IMR-90 (cell line): ENCODE measurements at regions of chr7 and their contacts with region 1.

Region 1: DNA sequence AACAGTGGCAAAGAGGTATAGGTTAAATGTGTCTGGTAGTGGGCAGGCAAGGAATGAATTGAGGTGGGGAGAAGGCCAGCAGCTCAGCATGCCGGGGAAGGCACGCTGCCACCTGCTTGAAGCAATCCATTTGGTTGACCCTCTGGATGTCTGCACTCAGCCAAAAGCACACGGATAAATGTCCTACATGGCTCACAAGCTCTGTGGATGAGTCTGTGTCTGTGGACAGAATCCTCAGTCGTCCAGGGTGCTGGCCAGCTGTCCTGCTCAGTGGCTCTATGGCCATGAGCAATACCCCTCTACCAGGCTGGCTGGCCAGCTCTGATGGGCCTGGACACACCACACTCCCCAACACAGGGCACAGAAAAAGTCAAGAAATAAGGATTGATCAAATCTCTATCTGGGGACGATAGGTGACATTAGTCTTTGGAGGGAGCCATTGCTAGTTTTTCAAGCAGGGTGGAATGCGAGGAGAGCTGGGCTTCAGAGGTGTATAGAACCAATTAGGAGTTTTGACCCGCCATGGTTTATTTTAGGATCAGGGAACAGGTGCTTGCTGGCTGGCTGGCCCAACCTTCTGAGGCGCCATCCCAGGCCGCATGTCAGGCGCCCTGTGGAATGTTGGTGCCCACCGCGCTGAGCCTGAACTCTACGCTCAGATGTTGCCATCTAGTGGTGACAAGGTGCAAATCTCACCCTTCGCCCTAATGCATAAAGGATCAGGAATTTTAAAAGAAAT is 493.4 kb downstream of the TNS3 start:
- DNase-seq: peak; percentile 67
- ATAC-seq: peak; percentile 69
- H3K4me3 ChIP-seq: no peak overlapping the region
- H3K27ac ChIP-seq: no peak overlapping the region
- H3K4me1 ChIP-seq: peaks cover 22% of the 10 kb centered on the region
- H3K27me3 ChIP-seq: no peaks in the 10 kb centered on the region
- CTCF ChIP-seq: peak; percentile 89
- POLR2A ChIP-seq: no peak
- RAD21 ChIP-seq: peak; percentile 94

Region 2: GRCh38 chr7:46352004-46352954 is 736.2 kb before region 1 on chr7:
- CTCF ChIA-PET with region 1: no interaction called
- POLR2A ChIA-PET with region 1: no interaction called
- dilution Hi-C with region 1: no loop called
- in situ Hi-C with region 1: loop called (anchors 5 kb)
- intact Hi-C with region 1: loop called (anchors 2 kb)
- DNase-seq: peak; percentile 72
- ATAC-seq: peak; percentile 70
- H3K4me3 ChIP-seq: no peak overlapping the region
- H3K27ac ChIP-seq: no peak overlapping the region
- H3K4me1 ChIP-seq: peaks cover 6% of the 10 kb centered on the region; the same call in 1 of the 2 replicates
- H3K27me3 ChIP-seq: no peaks in the 10 kb centered on the region
- CTCF ChIP-seq: peak; percentile 83
- POLR2A ChIP-seq: no peak
- RAD21 ChIP-seq: peak; percentile 97

Region 3: DNA sequence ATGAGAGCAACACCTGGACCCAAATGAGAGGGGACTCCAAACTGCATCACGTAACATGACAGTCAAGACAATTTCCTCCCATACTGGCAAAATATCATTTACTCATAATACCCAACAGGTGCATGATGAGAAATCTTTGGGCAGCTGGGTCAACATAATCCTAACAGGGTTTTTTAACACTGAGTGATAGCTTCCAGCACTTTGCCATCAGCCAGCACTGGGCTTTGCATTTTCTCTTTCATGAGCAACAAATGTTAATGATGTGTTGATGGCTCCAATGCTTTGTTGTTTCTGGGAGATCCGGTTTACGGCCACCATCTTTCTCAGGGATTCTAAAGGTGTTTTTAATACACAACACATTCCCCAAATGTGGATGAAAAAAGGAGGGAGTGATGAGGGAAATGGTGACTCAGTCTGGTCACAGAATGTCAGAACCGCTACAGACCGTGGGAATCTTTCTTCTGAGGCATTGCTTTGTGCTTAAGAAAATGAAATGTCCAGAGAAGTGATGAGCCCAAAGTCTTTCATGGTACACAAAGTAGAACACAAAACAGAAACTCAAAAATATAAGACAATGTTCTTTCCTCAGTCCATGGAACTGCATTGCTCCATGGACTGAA is 461.7 kb before region 1 on chr7:
- CTCF ChIA-PET with region 1: no interaction called
- POLR2A ChIA-PET with region 1: no interaction called
- dilution Hi-C with region 1: no loop called
- in situ Hi-C with region 1: no loop called
- intact Hi-C with region 1: loop called (anchors 10 kb)
- DNase-seq: peak; percentile 74
- ATAC-seq: peak; percentile 10
- H3K4me3 ChIP-seq: no peak overlapping the region
- H3K27ac ChIP-seq: peak overlapping the region; percentile 5; the same call in 1 of the 2 replicates
- H3K4me1 ChIP-seq: peaks cover 14% of the 10 kb centered on the region
- H3K27me3 ChIP-seq: no peaks in the 10 kb centered on the region
- CTCF ChIP-seq: no peak
- POLR2A ChIP-seq: no peak
- RAD21 ChIP-seq: no peak

Region 4: GRCh38 chr7:46776790-46777189 is 311.7 kb before region 1 on chr7:
- CTCF ChIA-PET with region 1: interaction called, 3 read pairs
- POLR2A ChIA-PET with region 1: no interaction called
- dilution Hi-C with region 1: no loop called
- in situ Hi-C with region 1: no loop called
- intact Hi-C with region 1: loop called (anchors 2 kb)
- DNase-seq: peak; percentile 36
- ATAC-seq: no peak
- H3K4me3 ChIP-seq: no peak overlapping the region
- H3K27ac ChIP-seq: no peak overlapping the region
- H3K4me1 ChIP-seq: no peaks in the 10 kb centered on the region
- H3K27me3 ChIP-seq: no peaks in the 10 kb centered on the region
- CTCF ChIP-seq: peak; percentile 55
- POLR2A ChIP-seq: no peak
- RAD21 ChIP-seq: peak; percentile 67

Region 5: GRCh38 chr7:46871516-46871915 is 217.0 kb before region 1 on chr7:
- CTCF ChIA-PET with region 1: no interaction called
- POLR2A ChIA-PET with region 1: no interaction called
- dilution Hi-C with region 1: no loop called
- in situ Hi-C with region 1: no loop called
- intact Hi-C with region 1: no loop called
- DNase-seq: no peak
- ATAC-seq: no peak
- H3K4me3 ChIP-seq: no peak overlapping the region
- H3K27ac ChIP-seq: no peak overlapping the region
- H3K4me1 ChIP-seq: no peaks in the 10 kb centered on the region
- H3K27me3 ChIP-seq: no peaks in the 10 kb centered on the region; the same call in 1 of the 2 replicates
- CTCF ChIP-seq: no peak
- POLR2A ChIP-seq: no peak
- RAD21 ChIP-seq: no peak

Region 6: DNA sequence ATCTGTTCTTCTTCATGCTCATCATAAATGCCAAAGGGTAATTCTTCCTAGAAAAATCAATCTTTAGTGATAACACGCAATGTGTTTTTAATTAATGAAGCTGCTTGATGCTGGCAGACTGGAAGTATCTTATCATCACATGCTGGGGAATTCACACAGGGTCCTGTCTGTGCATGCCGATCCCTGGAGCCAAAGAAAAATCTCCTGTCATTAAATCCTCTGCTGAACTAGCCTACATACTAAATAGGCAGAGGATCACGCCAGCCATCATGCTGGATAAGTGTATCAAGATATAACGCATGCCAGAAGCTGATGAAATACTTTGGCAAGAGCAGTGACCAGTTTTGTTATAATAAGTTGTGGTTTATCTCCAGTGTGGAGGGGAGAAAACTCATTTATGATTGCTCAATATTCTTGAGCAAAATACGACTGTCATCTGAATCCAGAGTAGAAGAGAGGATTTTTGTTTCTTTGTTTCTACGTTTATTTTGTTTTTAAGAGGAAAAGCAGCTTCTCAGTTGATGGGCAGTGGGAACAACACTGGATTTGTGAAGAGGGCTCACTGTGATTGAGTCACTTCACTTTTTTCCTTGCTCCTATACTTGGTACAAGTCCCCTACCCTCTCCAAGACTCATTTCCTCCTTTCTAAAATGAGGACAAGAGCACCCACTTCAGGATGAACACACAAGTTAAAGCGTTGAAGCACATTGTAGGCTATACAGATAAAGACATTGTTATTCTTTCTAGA is 155.6 kb before region 1 on chr7:
- CTCF ChIA-PET with region 1: no interaction called
- POLR2A ChIA-PET with region 1: no interaction called
- dilution Hi-C with region 1: no loop called
- in situ Hi-C with region 1: no loop called
- intact Hi-C with region 1: loop called (anchors 5 kb)
- DNase-seq: peak; percentile 96
- ATAC-seq: peak; percentile 75
- H3K4me3 ChIP-seq: no peak overlapping the region
- H3K27ac ChIP-seq: peak overlapping the region; percentile 80; the same call in 1 of the 2 replicates
- H3K4me1 ChIP-seq: peaks cover 14% of the 10 kb centered on the region
- H3K27me3 ChIP-seq: no peaks in the 10 kb centered on the region
- CTCF ChIP-seq: peak; percentile 38
- POLR2A ChIP-seq: no peak
- RAD21 ChIP-seq: peak; percentile 50

Region 7: DNA sequence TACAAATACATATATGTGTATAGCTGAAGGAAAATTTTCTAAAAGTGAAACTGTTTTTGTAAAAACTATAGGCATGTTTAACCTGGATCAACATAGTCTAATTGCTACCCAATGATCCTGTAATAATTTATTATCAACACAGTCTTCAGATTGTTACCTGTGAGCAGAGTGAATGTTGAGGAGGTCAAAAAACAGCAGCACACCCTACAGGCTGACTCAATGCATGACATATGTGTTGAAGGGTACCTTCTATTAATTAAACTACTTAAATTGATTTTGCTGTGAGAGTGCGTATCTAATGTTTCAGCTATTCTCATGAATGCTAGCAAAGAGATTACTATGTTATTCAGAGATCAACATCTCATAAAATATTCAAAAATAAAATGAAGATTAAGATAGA is 82.0 kb after region 1 on chr7:
- CTCF ChIA-PET with region 1: interaction called, 5 read pairs
- POLR2A ChIA-PET with region 1: no interaction called
- dilution Hi-C with region 1: no loop called
- in situ Hi-C with region 1: no loop called
- intact Hi-C with region 1: loop called (anchors 5 kb)
- DNase-seq: peak; percentile 29
- ATAC-seq: peak; percentile 51; the same call in 1 of the 2 replicates
- H3K4me3 ChIP-seq: no peak overlapping the region
- H3K27ac ChIP-seq: no peak overlapping the region
- H3K4me1 ChIP-seq: no peaks in the 10 kb centered on the region
- H3K27me3 ChIP-seq: peaks cover 7% of the 10 kb centered on the region
- CTCF ChIP-seq: peak; percentile 52
- POLR2A ChIP-seq: no peak
- RAD21 ChIP-seq: peak; percentile 53

Region 8: DNA sequence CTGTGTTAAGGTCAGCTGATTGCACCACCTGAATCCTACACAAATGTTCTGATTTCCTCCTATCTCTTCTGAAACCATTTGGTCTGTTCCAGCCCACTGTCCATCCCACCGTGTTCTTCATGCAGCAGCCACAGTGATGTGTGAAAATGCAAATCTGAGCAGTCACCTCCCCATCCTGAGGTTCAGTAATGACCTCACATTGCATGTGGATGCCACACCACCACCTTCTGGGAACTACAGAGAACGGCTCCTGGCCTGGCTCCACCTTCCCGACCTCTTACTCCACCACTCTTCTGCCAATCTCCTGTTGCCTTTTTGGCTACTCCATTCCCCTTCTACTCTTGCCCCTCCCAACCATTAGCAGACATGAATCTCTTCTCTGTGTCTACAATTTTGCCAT is 249.0 kb after region 1 on chr7:
- CTCF ChIA-PET with region 1: no interaction called
- POLR2A ChIA-PET with region 1: no interaction called
- dilution Hi-C with region 1: no loop called
- in situ Hi-C with region 1: no loop called
- intact Hi-C with region 1: no loop called
- DNase-seq: no peak
- ATAC-seq: no peak
- H3K4me3 ChIP-seq: no peak overlapping the region
- H3K27ac ChIP-seq: no peak overlapping the region
- H3K4me1 ChIP-seq: peaks cover 30% of the 10 kb centered on the region
- H3K27me3 ChIP-seq: no peaks in the 10 kb centered on the region
- CTCF ChIP-seq: no peak
- POLR2A ChIP-seq: no peak
- RAD21 ChIP-seq: no peak

Region 9: DNA sequence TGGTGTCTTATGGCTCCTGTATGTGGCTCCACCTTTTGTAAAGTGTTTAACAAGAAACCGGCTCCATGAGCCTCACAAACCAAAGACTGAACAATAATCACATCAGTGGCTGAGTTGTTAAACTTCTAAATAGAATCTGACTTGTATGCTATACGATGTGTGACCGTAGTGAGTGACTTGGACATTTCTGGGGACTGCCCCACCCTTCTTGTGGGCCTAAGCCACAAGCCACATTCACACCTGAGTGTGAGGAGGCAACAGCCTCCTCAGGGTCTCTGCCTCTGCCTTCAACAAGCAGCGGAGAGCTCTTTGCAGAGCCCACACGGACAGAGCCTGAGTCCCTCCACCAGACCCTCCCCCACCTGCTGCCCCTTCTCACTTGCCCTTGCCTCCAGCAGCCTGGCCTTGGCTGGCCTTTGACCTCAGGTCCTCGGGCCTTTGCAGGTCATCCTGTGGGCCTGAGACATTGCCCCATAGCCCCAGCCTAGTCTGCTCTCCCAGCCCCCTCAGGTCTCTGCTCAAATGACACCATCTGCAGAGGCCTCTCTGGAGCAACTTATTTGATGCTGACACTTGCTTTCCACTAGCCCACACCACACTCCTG is 650.2 kb after region 1 on chr7:
- CTCF ChIA-PET with region 1: no interaction called
- POLR2A ChIA-PET with region 1: no interaction called
- dilution Hi-C with region 1: no loop called
- in situ Hi-C with region 1: no loop called
- intact Hi-C with region 1: no loop called
- DNase-seq: no peak
- ATAC-seq: no peak
- H3K4me3 ChIP-seq: no peak overlapping the region
- H3K27ac ChIP-seq: no peak overlapping the region
- H3K4me1 ChIP-seq: peaks cover 8% of the 10 kb centered on the region
- H3K27me3 ChIP-seq: no peaks in the 10 kb centered on the region
- CTCF ChIP-seq: no peak
- POLR2A ChIP-seq: no peak
- RAD21 ChIP-seq: no peak